Pancreas (tissue), 10 donors: ENCODE measurements at regions of chr5 and their contacts with region 1.

Region 1: DNA sequence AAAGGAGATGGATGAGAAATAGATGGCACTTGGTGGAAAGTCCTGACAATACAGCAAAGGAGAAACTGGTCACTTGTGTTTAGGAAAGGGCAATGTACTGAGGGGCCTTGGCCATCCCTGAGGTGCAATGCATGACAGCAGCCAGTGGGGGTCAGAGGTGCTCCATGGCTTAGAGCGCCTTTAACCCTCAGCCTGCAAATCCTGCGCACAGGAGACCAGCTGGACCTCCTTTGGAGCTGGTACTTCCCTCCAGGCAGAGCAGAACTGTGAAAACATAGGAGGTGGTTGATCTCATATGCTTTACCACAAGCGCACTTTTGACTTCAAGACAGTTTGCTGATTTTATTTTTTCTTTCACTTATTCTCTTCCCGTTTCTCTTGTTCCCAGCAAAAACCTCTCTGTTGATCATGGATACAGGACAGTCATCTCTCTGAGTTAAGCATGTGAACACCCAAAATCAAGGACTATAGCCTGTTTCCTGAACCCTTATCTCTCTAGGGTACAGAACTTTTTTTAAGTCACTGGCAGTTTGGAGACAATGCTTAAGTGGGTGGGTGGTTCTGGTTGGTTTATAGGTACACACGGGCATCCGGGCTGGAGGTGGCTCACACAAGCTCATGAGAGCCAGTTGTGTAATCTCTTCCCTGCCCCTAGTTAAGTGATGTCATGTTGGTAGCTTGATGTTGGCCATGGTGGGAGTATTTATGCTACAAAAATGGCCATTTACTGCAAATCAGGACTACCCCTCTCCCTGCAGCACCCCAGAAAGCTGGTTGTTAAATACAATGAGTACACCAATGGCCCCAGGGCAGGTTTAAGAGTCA is 37.6 kb upstream of the ANKRD55 start:
- DNase-seq: peak; percentile 70 to 88 (median 85)
- ATAC-seq: peak; percentile 99 to 100 (median 100)
- H3K4me3 ChIP-seq: no peak overlapping the region
- H3K27ac ChIP-seq: peak overlapping the region in 1 of 4 donors; percentile 42
- H3K4me1 ChIP-seq: peaks cover 0 to 2% (median 0%) of the 10 kb centered on the region in 3 donors
- H3K27me3 ChIP-seq: no peaks in the 10 kb centered on the region
- CTCF ChIP-seq: peak; percentile 78 to 99 (median 96)

Region 2: GRCh38 chr5:56142620-56143372 is 128.0 kb before region 1 on chr5:
- intact Hi-C with region 1: no loop called
- DNase-seq: peak; percentile 27 to 81 (median 52)
- ATAC-seq: peak; percentile 51 to 90 (median 82)
- H3K4me3 ChIP-seq: no peak overlapping the region
- H3K27ac ChIP-seq: peak overlapping the region in 2 of 4 donors; percentile 71 to 82
- H3K4me1 ChIP-seq: peaks cover 8 to 35% (median 12%) of the 10 kb centered on the region in 3 donors
- H3K27me3 ChIP-seq: no peaks in the 10 kb centered on the region
- CTCF ChIP-seq: no peak

Region 3: GRCh38 chr5:56328753-56329560 is 58.2 kb after region 1 on chr5:
- intact Hi-C with region 1: loop called in 1 of 3 experiments (anchors 10 kb)
- DNase-seq: no peak
- ATAC-seq: peak in 3 of 4 donors; percentile 69 to 90 (median 76)
- H3K4me3 ChIP-seq: no peak overlapping the region
- H3K27ac ChIP-seq: peak overlapping the region in 2 of 4 donors; percentile 62 to 73
- H3K4me1 ChIP-seq: peaks cover 0 to 9% (median 0%) of the 10 kb centered on the region in 3 donors
- H3K27me3 ChIP-seq: no peaks in the 10 kb centered on the region
- CTCF ChIP-seq: no peak

Region 4: DNA sequence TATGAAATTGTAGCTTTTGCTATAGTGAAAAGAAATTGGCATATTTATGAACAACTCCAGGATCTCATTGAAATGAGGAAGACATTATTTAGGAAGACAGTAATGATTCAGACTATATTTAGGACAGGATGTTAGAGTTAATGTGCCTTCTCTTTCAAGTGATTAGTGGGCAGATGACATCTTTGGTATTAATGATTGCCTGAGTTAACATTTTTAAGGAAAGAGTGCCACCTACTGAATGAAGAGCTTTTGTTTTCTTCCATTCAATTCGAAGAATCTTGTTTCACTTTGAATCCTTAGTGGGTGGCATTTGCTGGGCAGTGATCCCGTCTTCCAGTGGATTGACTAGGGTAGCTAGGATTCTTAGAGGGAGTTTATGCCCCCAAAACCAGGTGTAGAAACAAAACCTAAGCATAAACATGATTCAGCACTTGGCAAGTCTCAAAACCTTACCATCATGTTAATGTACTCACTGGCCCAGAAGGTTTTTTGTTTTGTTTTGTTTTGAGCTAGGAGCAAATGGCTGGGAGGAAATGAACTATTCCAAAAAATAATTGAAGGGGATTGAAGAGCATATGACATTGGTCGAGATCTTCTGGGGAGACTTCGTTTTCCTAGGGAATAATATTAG is 567.7 kb after region 1 on chr5:
- intact Hi-C with region 1: loop called in 2 of 3 experiments (anchors 10 kb)
- DNase-seq: no peak
- ATAC-seq: peak; percentile 47 to 85 (median 80)
- H3K4me3 ChIP-seq: no peak overlapping the region
- H3K27ac ChIP-seq: peak overlapping the region in 2 of 4 donors; percentile 30 to 65
- H3K4me1 ChIP-seq: peaks cover 19 to 49% (median 39%) of the 10 kb centered on the region in 3 donors
- H3K27me3 ChIP-seq: no peaks in the 10 kb centered on the region
- CTCF ChIP-seq: peak in 2 of 4 donors; percentile 20 to 29